ENCODE measurements at regions of chr3 and their contacts with region 1.

Region 1: GRCh38 chr3:158727206-158728060 is 4.8 kb downstream of the RARRES1 start:
- DNase-seq: peak in 1 of 2 donors; percentile 71
- H3K4me3 ChIP-seq: no peak overlapping the region
- CTCF ChIP-seq: peak in 1 of 3 donors; percentile 83
- POLR2A ChIP-seq: no peak

Region 2: DNA sequence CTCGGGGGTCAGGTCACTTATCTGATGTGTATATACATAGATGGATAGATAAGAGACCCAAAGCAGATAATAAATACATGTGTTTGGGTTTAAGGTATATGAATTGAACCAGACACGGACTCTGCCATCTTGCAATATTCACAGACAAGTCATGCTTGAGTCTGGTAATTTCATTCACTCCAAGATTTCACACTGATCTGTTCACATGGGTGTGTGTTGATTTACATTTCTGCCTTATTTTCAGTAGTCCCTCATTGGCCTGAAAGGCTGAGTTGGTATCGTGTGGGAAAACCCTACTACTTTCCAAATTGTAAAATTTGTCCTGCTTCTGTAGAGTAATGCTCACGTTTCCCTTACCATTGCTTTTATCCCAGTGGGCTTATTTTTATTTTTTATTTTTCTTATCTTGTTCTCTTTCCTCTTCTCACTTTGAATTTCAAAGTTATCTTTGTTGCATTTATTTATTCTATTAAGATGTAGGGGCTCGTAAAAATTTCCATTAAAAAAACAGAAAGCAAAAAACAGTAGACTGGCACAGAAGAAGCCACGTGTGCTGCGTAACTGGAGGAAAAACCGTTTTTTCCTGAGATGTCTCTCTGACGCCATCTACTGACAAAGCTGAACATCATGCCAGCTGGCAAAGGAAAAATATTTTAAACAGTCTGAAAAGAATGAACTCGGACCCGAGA is 63.6 kb after region 1 on chr3:
- intact Hi-C with region 1: loop called (anchors 5 kb)
- DNase-seq: no peak
- H3K4me3 ChIP-seq: no peak overlapping the region
- CTCF ChIP-seq: peak in 1 of 3 donors; percentile 43
- POLR2A ChIP-seq: no peak

Region 3: GRCh38 chr3:160129459-160130061 is 1402.1 kb after region 1 on chr3:
- intact Hi-C with region 1: loop called (anchors 10 kb)
- DNase-seq: no peak
- H3K4me3 ChIP-seq: no peak overlapping the region
- CTCF ChIP-seq: no peak
- POLR2A ChIP-seq: no peak